ENCODE measurements at regions of chr6 and their contacts with region 1.

Region 1: GRCh38 chr6:18387061-18387721 is at the start of gene RNF144B:
- DNase-seq: peak; percentile 95
- H3K4me3 ChIP-seq: peak within 1 kb of the TSS; percentile 79 to 96 (median 89)
- H3K27ac ChIP-seq: peak within 1 kb of the TSS; percentile 79
- H3K4me1 ChIP-seq: peaks cover 31% of the 10 kb centered on the region
- H3K27me3 ChIP-seq: no peaks in the 10 kb centered on the region
- CTCF ChIP-seq: no peak
- POLR2A ChIP-seq: peak; percentile 92
- total RNA-seq, gene RNF144B: 78.3 and 97.3 TPM in 2 replicates

Region 2: DNA sequence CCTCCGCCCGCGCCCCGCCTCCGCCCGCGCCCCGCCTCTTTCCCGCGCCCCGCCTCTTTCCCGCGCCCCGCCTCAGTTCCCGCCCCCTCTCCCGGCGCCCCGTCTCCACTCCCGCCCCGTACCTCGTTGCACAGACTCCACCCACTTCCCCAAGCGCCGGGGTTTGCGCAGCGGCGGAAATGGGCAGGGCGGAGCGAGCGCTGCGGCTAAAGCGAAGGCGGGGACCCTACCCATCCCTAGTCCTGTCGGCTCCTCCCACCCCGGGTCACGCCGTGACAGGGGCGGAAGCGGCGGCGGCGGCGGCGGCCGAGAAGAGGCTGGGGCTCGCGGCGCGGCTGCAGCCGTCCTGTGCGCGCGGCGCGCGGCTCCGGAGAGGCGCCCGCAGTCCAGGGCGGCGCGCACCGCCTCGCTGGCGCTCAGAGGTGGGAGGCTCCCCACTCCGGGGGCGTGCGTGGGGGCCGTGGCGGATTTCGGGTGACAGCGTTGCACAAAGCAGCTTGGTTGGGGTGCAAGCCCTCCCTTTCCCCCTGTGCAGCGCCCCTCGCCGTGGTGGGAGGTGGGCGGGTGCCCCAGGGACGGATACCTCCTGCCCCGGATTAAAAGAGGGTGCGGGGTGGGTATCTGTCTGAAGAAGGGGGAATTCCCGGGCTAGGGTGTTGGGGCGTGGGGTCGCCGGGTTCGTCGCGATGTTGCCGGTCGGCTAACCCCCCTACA is 231.9 kb before region 1 on chr6 and contains the start of gene KDM1B:
- CTCF ChIA-PET with region 1: no interaction called
- POLR2A ChIA-PET with region 1: no interaction called
- dilution Hi-C with region 1: no loop called
- intact Hi-C with region 1: loop called (anchors 10 kb)
- DNase-seq: peak; percentile 98
- H3K4me3 ChIP-seq: peak within 1 kb of the TSS; percentile 91 to 95 (median 92)
- H3K27ac ChIP-seq: peak within 1 kb of the TSS; percentile 71
- H3K4me1 ChIP-seq: peaks cover 19% of the 10 kb centered on the region
- H3K27me3 ChIP-seq: no peaks in the 10 kb centered on the region
- CTCF ChIP-seq: no peak
- POLR2A ChIP-seq: no peak
- total RNA-seq, gene KDM1B: 9.6 and 10.8 TPM in 2 replicates

Region 3: GRCh38 chr6:18302561-18303439 is 84.4 kb before region 1 on chr6:
- CTCF ChIA-PET with region 1: no interaction called
- POLR2A ChIA-PET with region 1: no interaction called
- dilution Hi-C with region 1: no loop called
- intact Hi-C with region 1: no loop called
- DNase-seq: peak; percentile 26
- H3K4me3 ChIP-seq: no peak overlapping the region
- H3K27ac ChIP-seq: no peak overlapping the region
- H3K4me1 ChIP-seq: no peaks in the 10 kb centered on the region
- H3K27me3 ChIP-seq: peaks cover 0 to 2% of the 10 kb centered on the region in 2 experiments
- CTCF ChIP-seq: no peak
- POLR2A ChIP-seq: no peak

Region 4: GRCh38 chr6:18323935-18324705 is 63.1 kb before region 1 on chr6:
- CTCF ChIA-PET with region 1: interaction called, 11 read pairs
- POLR2A ChIA-PET with region 1: interaction called, 4 read pairs
- dilution Hi-C with region 1: no loop called
- intact Hi-C with region 1: loop called (anchors 1 kb)
- DNase-seq: peak; percentile 69
- H3K4me3 ChIP-seq: no peak overlapping the region
- H3K27ac ChIP-seq: no peak overlapping the region
- H3K4me1 ChIP-seq: peaks cover 16% of the 10 kb centered on the region
- H3K27me3 ChIP-seq: no peaks in the 10 kb centered on the region
- CTCF ChIP-seq: peak; percentile 48 to 49
- POLR2A ChIP-seq: no peak

Region 5: GRCh38 chr6:18371010-18371409 is 16.2 kb before region 1 on chr6:
- CTCF ChIA-PET with region 1: interaction called, 12 read pairs
- POLR2A ChIA-PET with region 1: interaction called, 12 read pairs
- dilution Hi-C with region 1: no loop called
- intact Hi-C with region 1: loop called (anchors 1 kb)
- DNase-seq: peak; percentile 87
- H3K4me3 ChIP-seq: peak overlapping the region in 1 of 3 experiments; percentile 5
- H3K27ac ChIP-seq: peak overlapping the region; percentile 83
- H3K4me1 ChIP-seq: peaks cover 43% of the 10 kb centered on the region
- H3K27me3 ChIP-seq: no peaks in the 10 kb centered on the region
- CTCF ChIP-seq: no peak
- POLR2A ChIP-seq: peak; percentile 44

Region 6: DNA sequence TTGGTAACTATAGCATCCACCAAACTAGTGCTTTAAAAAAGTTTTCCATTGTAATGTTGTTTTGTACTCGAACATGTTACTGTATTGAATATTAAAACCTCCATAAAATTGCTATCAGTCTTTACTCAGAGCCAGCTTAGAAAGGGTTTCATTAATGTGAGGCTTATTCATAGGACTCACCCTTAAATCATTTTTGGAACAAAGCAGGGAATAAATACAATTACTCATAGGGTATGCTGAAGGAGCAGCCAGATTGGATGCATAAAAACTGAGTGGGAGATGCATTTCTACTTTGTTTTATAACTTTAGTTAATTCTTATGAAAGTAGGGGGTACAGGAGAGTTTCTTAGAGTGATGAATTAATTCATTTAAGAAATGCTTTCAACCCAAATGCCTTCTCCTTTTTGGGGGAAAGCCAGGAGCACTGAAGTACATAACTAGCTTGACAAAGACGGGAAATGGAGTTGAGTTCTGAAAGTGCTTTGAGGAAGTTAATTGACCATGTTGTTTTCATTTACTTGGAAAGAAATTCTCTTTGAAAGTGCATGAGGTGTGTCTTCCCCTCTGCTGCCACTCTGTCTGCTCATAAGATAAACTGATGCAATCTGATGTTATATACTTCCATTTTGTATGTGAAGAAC is 90.2 kb after region 1 on chr6:
- CTCF ChIA-PET with region 1: interaction called, 3 read pairs
- POLR2A ChIA-PET with region 1: no interaction called
- dilution Hi-C with region 1: no loop called
- intact Hi-C with region 1: loop called (anchors 2 kb)
- DNase-seq: peak; percentile 79
- H3K4me3 ChIP-seq: no peak overlapping the region
- H3K27ac ChIP-seq: peak overlapping the region; percentile 30
- H3K4me1 ChIP-seq: peaks cover 20% of the 10 kb centered on the region
- H3K27me3 ChIP-seq: no peaks in the 10 kb centered on the region
- CTCF ChIP-seq: no peak
- POLR2A ChIP-seq: no peak

Measured in endothelial cell of umbilical vein (primary cell).